Activated B cell treated with CpG ODN at 0.5 μM for 24 hours (primary cell): ENCODE measurements at regions of chr12 and their contacts with region 1.

Region 1: DNA sequence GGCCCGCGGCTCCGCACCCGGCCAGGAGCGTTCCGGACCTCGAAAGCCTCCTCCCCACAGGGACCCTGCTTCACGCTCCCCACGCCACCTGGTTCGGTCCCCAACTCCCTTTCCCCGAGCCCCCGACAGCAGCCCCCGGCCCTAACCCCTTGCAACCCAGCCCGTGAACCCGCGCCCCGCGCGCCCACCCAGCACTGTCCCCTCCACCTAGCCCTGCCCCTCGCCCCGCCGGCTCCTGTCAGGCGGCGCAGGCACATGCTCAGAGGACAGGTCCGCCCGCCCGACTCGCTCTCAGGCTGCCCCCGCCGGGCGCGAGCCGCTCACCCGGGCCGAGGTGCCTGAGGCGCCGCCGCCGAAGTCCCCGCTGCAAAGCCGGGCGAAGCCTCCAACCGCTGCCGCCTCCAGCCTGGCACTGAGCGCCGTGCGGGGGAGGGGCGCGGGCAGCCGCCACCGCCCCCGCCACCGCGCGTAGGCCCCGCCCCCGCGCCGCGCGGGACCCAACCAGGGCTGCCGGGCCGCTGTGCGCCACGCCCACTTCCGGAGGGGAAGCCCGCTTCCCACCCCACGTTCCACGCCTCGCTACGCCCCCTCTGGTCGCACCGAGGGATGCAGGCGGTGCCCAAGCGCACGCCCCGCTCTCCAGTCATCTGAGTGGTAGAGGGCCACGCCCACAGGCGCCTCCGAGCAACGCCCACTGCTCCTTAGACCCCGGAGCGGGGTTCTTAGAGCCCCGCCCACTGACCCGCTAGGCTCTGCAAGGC is at the start of gene CORO1C:
- DNase-seq: peak; percentile 98
- ATAC-seq: peak; percentile 73
- H3K4me3 Mint-ChIP-seq: peak within 1 kb of the TSS; percentile 97
- H3K27ac Mint-ChIP-seq: peak within 1 kb of the TSS; percentile 96
- H3K4me1 Mint-ChIP-seq: peaks cover 48% of the 10 kb centered on the region
- H3K27me3 Mint-ChIP-seq: no peaks in the 10 kb centered on the region
- CTCF ChIP-seq: no peak
- total RNA-seq, gene CORO1C: 68.3 and 69.4 TPM in 2 replicates

Region 2: DNA sequence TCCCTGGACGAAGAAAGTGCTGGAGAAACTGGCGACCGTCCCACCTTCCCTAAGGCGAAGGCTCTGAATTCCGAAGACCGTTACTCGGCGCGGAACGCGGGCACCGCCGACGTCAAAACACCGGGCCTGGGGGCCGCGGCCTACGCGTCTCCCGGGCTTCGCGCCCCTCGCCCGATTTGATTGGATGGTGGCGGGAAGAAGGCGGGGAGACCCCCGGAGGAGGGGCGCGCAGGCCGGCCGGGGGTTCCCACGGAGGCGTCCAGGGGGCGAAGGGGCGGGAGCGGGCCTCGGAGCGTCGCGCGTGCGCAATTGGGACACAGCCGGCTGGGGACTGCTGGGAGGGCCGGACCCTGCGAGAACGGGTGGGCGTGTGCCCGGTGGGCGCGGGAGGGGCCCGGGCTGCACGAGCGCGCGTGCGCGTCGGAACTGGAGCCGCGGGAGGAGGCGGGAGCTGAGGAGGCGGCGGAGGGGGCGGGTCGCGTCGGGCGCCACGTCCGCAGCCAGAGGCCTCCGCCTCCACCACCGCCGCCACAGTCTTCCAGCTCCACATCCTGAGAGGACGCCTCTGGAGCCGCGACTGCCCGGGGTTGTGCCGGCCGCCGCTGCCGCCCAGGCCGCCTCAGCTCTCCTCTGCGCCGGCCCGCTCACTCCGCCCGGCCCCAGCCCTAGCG is 1775.8 kb before region 1 on chr12 and contains the start of gene TMEM263:
- CTCF ChIA-PET with region 1: no interaction called
- POLR2A ChIA-PET with region 1: no interaction called
- intact Hi-C with region 1: loop called (anchors 5 kb)
- DNase-seq: peak; percentile 91
- ATAC-seq: peak; percentile 86
- H3K4me3 Mint-ChIP-seq: peak within 1 kb of the TSS; percentile 96
- H3K27ac Mint-ChIP-seq: peak within 1 kb of the TSS; percentile 84
- H3K4me1 Mint-ChIP-seq: peaks cover 23% of the 10 kb centered on the region
- H3K27me3 Mint-ChIP-seq: no peaks in the 10 kb centered on the region
- CTCF ChIP-seq: no peak
- total RNA-seq, gene TMEM263: 10.5 and 15.1 TPM in 2 replicates

Region 3: GRCh38 chr12:108551535-108551934 is 179.8 kb before region 1 on chr12:
- CTCF ChIA-PET with region 1: no interaction called
- POLR2A ChIA-PET with region 1: no interaction called
- intact Hi-C with region 1: no loop called
- DNase-seq: no peak
- ATAC-seq: no peak
- H3K4me3 Mint-ChIP-seq: no peak overlapping the region
- H3K27ac Mint-ChIP-seq: no peak overlapping the region
- H3K4me1 Mint-ChIP-seq: peaks cover 62% of the 10 kb centered on the region
- H3K27me3 Mint-ChIP-seq: no peaks in the 10 kb centered on the region
- CTCF ChIP-seq: no peak

Region 4: DNA sequence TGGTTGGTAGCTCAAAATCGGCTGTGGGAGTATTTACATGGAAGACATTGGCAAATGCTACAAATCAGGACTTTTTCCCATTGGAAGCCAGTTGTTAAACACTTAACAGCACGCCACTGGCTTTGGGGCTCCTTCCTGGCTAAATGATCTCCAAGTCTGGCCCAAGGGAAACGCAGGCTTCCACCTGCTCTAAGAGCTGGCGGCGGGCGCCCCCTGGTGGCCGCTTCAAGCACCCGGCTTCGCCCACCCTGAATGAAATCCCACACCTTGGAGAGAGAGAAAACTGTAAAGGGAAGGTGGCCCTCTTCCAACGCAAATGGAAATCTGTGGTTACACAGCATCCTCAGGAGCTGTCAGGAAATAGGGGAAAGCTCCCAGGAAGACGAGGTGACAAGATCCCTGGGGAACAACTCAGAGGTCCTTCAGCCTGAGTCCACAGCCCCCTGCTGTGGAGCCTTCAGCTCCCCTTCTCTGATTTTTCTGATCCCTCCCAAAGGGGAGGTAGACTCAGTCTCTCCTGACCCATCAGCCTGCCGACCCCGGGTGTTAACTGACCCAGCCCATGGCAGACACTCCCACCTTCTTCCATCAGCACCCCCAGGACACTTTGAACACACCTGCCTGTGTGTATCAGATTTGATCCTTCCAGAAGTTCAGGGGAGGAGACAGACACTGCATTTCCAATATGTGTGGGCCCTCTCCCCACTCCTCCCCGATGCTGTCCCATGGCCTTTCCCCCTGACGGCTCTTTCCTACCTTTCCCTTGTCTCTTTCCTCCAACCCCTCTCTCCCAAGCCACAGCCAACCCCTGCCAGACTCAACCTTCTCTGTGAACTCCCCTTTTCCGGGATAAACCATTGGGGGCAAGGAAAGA is 113.0 kb before region 1 on chr12:
- CTCF ChIA-PET with region 1: interaction called, 6 read pairs
- POLR2A ChIA-PET with region 1: interaction called, 5 read pairs
- intact Hi-C with region 1: loop called (anchors 1 kb)
- DNase-seq: peak; percentile 76
- ATAC-seq: peak; percentile 40
- H3K4me3 Mint-ChIP-seq: peak overlapping the region; percentile 19
- H3K27ac Mint-ChIP-seq: peak overlapping the region; percentile 53
- H3K4me1 Mint-ChIP-seq: peaks cover 70% of the 10 kb centered on the region
- H3K27me3 Mint-ChIP-seq: no peaks in the 10 kb centered on the region
- CTCF ChIP-seq: peak; percentile 60

Region 5: GRCh38 chr12:108664338-108665258 is 66.7 kb before region 1 on chr12:
- CTCF ChIA-PET with region 1: interaction called, 8 read pairs
- POLR2A ChIA-PET with region 1: interaction called, 6 read pairs
- intact Hi-C with region 1: loop called (anchors 1 kb)
- DNase-seq: peak; percentile 33
- ATAC-seq: peak; percentile 97
- H3K4me3 Mint-ChIP-seq: peak overlapping the region; percentile 36
- H3K27ac Mint-ChIP-seq: peak overlapping the region; percentile 85
- H3K4me1 Mint-ChIP-seq: peaks cover 57% of the 10 kb centered on the region
- H3K27me3 Mint-ChIP-seq: no peaks in the 10 kb centered on the region
- CTCF ChIP-seq: peak; percentile 61

Region 6: DNA sequence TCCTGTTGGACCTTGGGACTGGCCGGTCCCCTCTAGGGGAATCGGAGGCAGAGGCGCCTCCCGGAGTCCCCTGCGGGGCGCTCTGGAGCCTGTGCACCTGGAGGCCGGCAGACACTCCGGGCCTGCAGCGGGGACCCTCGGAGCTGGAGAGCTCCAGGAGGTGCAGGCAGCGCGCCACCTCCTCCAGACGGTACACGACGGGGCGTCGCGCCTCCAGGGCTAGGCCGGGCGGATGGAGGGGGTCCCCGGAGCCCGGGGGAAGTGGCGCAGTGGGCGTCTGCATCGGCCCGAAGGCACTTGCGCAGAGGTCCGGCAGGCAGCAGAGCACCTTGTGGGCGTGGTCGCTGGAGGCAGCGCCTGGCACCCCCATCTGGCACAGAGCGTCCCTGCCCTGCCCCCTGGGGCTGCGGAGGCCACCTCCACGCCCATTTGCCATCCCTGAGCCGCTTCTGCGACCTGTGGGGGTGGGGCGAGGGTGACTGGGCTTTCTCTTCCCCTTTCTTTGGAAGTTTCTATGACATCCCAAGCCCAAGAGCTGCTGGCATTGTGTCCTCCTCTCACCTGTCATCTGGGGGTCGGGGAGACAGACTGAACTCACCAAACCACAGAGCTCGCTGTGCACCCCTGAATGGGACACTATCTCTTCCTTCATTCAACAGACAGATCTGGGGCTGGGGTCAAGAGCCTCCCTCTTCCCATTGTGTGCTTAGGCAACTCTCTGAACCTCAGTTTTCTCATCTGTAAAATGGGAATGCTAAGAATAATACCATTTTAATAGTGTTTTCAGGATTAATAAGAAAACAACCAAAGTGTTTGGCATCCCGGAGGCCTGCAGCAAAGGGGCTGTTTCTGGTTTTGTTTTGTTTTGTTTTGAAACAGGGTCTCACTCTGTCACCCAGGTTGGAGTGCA is 37.6 kb after region 1 on chr12:
- CTCF ChIA-PET with region 1: no interaction called
- POLR2A ChIA-PET with region 1: interaction called, 3 read pairs
- intact Hi-C with region 1: loop called (anchors 5 kb)
- DNase-seq: peak; percentile 40
- ATAC-seq: peak; percentile 81
- H3K4me3 Mint-ChIP-seq: peak overlapping the region; percentile 73
- H3K27ac Mint-ChIP-seq: no peak overlapping the region
- H3K4me1 Mint-ChIP-seq: peaks cover 29% of the 10 kb centered on the region
- H3K27me3 Mint-ChIP-seq: no peaks in the 10 kb centered on the region
- CTCF ChIP-seq: no peak

Region 7: DNA sequence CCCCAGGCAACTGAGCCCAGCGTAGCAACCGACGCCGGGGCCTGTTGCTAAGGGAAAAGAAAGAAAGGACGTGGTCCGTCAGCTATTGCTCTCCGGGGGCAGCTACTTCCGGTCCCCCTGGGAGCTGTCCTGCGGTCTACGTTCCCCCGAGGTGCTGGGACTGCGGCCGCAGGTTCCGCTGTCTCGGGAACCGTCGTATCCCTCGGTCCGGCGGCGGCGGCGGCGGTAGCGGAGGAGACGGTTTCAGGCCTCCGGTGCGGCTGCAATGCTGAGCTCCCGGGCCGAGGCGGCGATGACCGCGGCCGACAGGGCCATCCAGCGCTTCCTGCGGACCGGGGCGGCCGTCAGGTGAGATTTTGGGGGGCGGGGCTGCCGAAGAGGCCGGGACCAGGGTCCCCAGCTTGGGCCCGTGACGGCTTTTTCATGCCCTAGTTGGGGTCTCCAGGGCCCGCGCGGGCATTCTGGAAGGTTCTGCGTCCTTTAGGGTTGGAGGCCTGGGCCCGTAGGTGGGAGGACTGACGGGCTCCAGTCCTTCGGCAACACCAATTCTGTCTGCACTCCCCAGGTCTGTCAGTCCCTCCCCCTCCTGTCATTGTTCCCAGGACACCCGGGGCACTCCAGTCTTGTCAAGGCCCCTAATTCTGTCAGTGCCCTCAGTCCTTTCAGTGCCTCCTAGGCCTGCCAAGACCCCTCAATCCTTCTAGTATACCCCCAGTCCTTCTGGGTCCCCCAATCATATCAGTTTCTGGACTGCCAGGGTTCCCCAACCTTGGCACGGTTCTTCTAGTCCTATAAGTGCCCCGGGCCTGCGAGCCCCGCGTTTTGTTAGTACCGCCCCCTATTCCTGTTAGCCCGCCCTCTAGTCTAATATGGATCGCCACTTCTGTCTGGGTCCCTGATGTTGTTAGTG is 321.4 kb after region 1 on chr12 and contains the start of gene USP30:
- CTCF ChIA-PET with region 1: no interaction called
- POLR2A ChIA-PET with region 1: no interaction called
- intact Hi-C with region 1: loop called (anchors 2 kb)
- DNase-seq: peak; percentile 80
- ATAC-seq: peak; percentile 85
- H3K4me3 Mint-ChIP-seq: peak within 1 kb of the TSS; percentile 85
- H3K27ac Mint-ChIP-seq: peak within 1 kb of the TSS; percentile 86
- H3K4me1 Mint-ChIP-seq: peaks cover 22% of the 10 kb centered on the region
- H3K27me3 Mint-ChIP-seq: no peaks in the 10 kb centered on the region
- CTCF ChIP-seq: no peak
- total RNA-seq, gene USP30: 17.4 and 17.7 TPM in 2 replicates